Right ventricle myocardium superior (tissue), 1 donor: ENCODE measurements at regions of chr1 and their contacts with region 1.

Region 1: DNA sequence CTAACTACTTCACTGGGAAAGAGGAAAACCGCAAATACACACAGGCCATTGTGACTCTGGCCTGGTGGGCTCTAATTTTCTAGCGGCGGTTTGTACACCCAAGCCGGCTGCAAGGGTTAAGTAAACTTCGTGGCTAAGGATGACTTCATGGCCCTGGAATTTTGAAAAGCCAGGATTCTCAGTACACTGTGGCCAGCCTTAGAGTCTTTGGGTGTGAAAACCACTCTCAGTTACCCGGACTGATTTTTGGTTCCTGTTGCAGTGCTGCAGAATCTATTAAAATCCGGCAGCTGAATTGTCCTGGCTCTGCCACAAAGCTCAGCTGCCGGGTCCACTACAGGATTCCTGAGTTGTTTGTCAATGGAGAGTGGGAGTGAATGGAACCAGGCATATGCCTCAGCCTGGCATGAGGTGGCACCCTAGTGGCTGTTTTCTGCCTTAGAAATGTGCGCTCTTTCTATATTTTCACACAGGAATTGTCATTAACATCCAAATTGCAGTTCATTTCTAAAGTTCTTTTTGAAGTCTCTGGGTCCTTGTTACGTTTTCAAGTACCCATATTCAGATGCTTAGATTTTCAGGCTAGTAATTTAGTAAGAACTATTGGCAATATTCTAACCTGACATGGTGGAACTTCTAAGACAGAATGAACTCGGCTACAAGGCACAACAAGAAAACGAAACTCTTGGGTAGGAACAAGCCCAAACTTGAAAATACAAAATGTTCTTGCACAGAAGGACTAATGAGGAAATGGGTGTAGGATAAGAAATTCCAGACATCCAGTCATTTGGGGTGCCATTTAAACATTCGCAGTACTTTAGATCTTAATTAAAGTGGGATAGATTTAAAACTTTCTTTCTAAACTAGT is 255.9 kb downstream of the NFIA start:
- DNase-seq: peak; percentile 68
- ATAC-seq: peak; percentile 86

Region 2: DNA sequence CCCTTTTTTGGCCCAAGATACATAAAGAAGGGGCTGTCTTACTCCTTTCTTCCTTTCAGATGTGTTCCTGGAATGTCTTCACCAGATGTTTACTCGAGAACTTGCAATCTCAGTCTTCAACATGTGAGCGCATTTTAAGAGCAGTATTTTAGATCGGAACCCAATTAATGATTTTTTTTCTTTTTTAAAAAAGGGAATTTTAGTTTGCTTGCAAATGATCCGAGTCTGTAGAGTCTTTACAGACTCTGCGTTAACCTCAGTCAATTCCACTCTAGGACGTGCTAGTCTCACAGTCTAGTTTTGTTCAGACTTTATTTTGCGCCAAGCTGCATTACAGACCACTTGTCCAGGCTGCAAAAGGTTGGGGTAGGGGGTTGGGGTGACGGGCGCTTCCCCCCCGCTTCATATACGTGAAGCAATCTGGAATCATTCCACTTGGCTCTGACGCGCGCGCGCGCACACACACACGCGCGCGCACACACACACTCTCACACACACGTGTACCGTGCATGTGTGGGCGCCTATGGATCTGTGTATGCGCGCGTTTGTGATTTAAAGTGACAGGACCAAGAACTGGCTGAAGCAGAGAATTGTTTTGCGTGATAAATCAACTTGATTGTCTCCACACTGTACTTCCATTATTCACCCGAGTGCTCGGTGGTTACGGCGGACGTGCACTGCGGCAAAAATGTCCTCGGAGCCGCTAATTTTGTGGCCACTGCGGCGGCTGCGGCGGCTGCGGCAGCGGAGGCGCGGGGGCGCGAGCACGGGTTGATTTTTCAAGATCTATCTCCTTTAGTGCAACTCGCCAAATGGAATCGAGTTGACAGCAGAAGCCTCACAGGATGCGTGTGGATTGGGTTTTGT is 281.4 kb before region 1 on chr1:
- intact Hi-C with region 1: loop called (anchors 5 kb)
- DNase-seq: peak; percentile 85
- ATAC-seq: peak; percentile 61

Region 3: GRCh38 chr1:61079898-61080336 is 258.3 kb before region 1 on chr1:
- intact Hi-C with region 1: loop called (anchors 5 kb)
- DNase-seq: peak; percentile 89
- ATAC-seq: peak; percentile 61

Region 4: DNA sequence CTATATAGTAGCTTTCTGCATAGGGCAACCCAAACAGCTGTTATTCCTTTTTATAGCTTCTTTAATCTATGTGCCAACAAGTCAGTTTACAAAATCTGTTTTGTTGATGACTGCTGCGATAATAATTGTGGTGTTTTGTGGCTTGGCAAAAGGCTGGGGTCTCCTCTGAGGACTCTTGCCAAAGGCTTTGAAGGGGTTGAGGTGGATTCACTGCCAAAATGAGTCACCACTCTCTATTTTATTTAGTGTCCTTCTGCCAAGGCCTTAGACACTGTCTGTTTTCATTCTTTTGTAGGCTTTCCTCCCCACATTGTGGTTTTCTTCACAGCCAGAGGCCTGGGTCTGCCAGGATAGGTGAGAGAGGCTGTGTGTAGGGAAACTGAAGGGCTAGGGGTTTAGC is 94.1 kb before region 1 on chr1:
- intact Hi-C with region 1: loop called (anchors 10 kb)
- DNase-seq: no peak
- ATAC-seq: peak; percentile 13

Region 5: DNA sequence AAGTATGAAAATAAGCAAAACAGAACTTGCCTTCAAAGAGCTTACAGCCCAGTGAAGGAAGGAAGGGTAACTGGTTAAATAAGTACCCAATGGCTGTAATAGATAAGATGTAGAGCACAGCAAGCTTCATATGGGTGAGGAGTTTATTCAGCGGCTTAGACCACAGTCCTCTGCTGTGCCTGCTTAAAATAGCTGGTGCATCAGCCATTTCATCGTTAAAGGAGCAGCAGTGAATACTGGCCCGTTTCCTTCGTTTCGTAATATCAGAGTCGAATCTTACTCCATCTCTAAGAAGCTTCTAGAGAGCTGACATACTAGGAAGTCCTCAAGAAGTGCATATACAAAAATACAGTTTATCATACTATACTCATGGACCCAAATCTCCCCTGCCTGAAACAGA is 30.7 kb after region 1 on chr1:
- intact Hi-C with region 1: no loop called
- DNase-seq: no peak
- ATAC-seq: peak; percentile 79

Region 6: DNA sequence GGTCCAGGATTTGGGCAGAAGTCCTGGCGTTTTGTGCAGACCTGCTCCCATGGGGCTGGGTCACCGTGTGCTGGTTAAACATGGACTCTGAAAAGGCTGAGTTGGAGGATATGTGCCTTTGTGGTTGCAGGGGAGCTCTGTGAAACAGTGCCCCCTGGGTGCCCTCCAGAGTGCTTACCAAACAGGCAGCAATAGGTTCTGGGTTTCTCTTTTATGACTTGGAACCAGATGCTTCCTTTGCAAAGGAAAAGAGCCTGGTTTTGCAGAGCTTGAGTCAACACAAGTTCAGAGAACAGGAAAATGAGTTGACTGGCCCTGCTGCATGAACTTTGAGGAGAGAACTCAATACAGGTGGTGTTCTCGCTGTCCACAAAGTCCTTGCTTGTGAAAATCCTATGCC is 97.8 kb after region 1 on chr1:
- intact Hi-C with region 1: loop called (anchors 10 kb)
- DNase-seq: no peak
- ATAC-seq: no peak

Region 7: GRCh38 chr1:61481313-61481712 is 143.1 kb after region 1 on chr1:
- intact Hi-C with region 1: no loop called
- DNase-seq: no peak
- ATAC-seq: no peak